ENCODE measurements at regions of chr10 and their contacts with region 1.

Region 1: DNA sequence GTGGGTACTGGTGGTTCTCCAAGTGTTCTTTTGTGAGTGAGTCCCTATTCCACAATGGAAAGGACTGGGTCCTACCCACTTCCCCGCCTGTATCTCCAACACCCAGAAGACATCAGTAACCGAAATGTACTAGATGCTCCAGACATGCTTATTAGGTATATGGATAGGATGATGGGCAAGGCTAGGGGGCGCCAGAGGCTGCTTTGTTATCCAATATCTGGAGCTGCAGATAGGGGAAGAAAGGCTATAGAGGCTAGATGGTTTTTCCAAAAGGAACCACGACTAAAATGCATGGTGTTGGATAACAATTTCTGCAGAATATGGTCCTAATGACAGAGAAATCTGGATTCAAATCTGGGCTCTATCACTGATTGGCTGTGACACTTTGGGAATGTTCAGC is 56.2 kb upstream of the TM9SF3 start:
- DNase-seq: peak; percentile 78 to 93 (median 90)
- ATAC-seq: peak; percentile 64
- H3K4me3 ChIP-seq: no peak overlapping the region
- H3K27ac ChIP-seq: peak overlapping the region in 1 of 4 donors; percentile 66
- H3K4me1 ChIP-seq: peaks cover 42% of the 10 kb centered on the region
- H3K27me3 ChIP-seq: no peaks in the 10 kb centered on the region
- CTCF ChIP-seq: peak; percentile 36 to 94 (median 86)
- POLR2A ChIP-seq: no peak

Region 2: GRCh38 chr10:96509017-96509641 is 133.8 kb before region 1 on chr10:
- intact Hi-C with region 1: no loop called
- DNase-seq: no peak
- ATAC-seq: no peak
- H3K4me3 ChIP-seq: no peak overlapping the region
- H3K27ac ChIP-seq: no peak overlapping the region
- H3K4me1 ChIP-seq: peaks cover 20% of the 10 kb centered on the region
- H3K27me3 ChIP-seq: no peaks in the 10 kb centered on the region
- CTCF ChIP-seq: no peak
- POLR2A ChIP-seq: no peak

Region 3: DNA sequence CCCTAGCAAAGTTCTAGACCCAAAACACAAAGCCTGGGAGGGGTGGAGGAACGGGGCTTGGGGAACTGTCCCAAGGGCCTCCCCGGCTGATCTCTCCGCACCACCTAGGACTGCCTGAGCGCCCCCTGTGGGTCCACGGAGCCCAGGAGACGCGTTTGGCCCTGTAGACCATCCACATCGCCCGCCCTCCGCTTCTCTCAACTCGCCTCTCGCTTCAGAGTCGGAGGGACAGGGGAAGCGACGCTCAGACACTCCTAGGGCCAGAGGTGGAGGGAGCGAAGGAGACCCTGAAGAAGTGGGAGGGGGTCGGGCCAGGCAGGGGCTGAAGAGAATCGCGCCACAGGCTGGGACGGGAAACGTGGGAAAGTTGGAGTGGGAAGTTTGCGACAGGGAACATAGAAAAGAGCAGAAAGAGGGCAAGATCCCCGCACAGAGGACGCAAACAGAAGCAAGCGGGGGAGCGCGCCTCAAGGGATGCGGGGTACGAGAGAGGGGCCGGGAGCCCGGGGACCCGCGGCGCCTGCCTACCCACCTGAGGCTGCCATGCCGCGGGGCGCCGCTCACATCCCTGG is 77.0 kb after region 1 on chr10:
- intact Hi-C with region 1: loop called (anchors 5 kb)
- DNase-seq: peak; percentile 78 to 87 (median 84)
- ATAC-seq: peak; percentile 76
- H3K4me3 ChIP-seq: peak overlapping the region; percentile 33 to 44
- H3K27ac ChIP-seq: peak overlapping the region; percentile 25 to 80 (median 77)
- H3K4me1 ChIP-seq: peaks cover 49% of the 10 kb centered on the region
- H3K27me3 ChIP-seq: no peaks in the 10 kb centered on the region
- CTCF ChIP-seq: peak; percentile 59 to 81 (median 67)
- POLR2A ChIP-seq: peak in 1 of 3 donors; percentile 24